HepG2 (cell line): ENCODE measurements at regions of chr2 and their contacts with region 1.

Region 1: GRCh38 chr2:138724327-138724726 is 55.9 kb downstream of the NXPH2 start:
- DNase-seq: peak; percentile 41
- ATAC-seq: peak; percentile 71
- H3K4me3 ChIP-seq: no peak overlapping the region; a peak in 1 of 6 replicates
- H3K27ac ChIP-seq: no peak overlapping the region
- H3K4me1 ChIP-seq: peaks cover 49% of the 10 kb centered on the region
- H3K27me3 ChIP-seq: peaks cover 2 to 15% of the 10 kb centered on the region in 2 experiments; a peak in 2 of 5 replicates
- CTCF ChIP-seq: no peak
- EP300 ChIP-seq: peak in 1 of 2 experiments; percentile 32; a peak in 1 of 4 replicates
- POLR2A ChIP-seq: no peak
- RAD21 ChIP-seq: no peak

Region 2: GRCh38 chr2:138632066-138632620 is 92.2 kb before region 1 on chr2:
- CTCF ChIA-PET with region 1: no interaction called
- POLR2A ChIA-PET with region 1: no interaction called
- in situ Hi-C with region 1: no loop called
- intact Hi-C with region 1: no loop called
- DNase-seq: no peak
- ATAC-seq: no peak
- H3K4me3 ChIP-seq: no peak overlapping the region
- H3K27ac ChIP-seq: no peak overlapping the region
- H3K4me1 ChIP-seq: no peaks in the 10 kb centered on the region
- H3K27me3 ChIP-seq: no peaks in the 10 kb centered on the region
- CTCF ChIP-seq: no peak
- EP300 ChIP-seq: no peak
- POLR2A ChIP-seq: no peak
- RAD21 ChIP-seq: no peak

Region 3: DNA sequence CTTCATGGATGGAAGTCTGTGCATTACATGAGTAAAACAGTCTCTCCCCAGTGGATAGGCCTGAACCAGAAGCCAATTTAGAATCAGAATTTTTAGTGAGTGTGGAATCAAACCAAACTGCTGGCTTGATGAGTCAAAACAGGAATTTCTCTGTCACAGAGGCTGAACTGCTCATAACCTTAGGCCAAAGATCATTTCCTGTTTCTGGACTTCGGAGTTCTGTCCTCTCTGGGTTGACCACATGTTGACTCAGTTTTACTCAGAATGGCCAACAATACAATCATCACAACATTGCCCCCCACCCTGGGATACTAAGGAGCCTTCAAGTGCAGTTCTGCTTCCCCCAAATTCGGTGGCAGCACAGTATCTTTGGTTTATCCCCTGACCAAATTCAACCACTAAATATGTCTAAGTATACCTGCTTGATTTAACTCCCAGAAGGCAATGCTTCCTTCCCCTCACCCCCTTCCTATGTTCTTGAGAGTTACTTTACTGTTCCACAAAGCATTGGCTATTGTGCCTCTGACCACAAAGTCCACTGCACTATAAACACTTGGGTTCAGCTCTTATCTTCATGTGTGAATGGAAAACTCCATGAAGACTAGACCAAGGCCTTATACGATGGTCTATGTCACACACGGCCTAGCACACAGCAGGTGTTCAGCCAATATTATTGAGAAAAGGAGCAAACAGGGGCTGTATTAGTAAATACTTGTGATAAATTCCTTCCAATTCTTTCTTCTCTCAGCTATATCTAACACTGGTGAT is 11.9 kb before region 1 on chr2:
- CTCF ChIA-PET with region 1: no interaction called
- POLR2A ChIA-PET with region 1: interaction called, 15 read pairs
- in situ Hi-C with region 1: no loop called
- intact Hi-C with region 1: no loop called
- DNase-seq: peak; percentile 37
- ATAC-seq: peak; percentile 76
- H3K4me3 ChIP-seq: peak overlapping the region in 2 of 3 experiments; percentile 21 to 43; a peak in 1 of 6 replicates
- H3K27ac ChIP-seq: no peak overlapping the region
- H3K4me1 ChIP-seq: peaks cover 46% of the 10 kb centered on the region
- H3K27me3 ChIP-seq: peaks cover 0 to 12% of the 10 kb centered on the region in 2 experiments; a peak in 2 of 5 replicates
- CTCF ChIP-seq: no peak
- EP300 ChIP-seq: peak in 1 of 2 experiments; percentile 53; a peak in 1 of 4 replicates
- POLR2A ChIP-seq: no peak
- RAD21 ChIP-seq: no peak

Region 4: DNA sequence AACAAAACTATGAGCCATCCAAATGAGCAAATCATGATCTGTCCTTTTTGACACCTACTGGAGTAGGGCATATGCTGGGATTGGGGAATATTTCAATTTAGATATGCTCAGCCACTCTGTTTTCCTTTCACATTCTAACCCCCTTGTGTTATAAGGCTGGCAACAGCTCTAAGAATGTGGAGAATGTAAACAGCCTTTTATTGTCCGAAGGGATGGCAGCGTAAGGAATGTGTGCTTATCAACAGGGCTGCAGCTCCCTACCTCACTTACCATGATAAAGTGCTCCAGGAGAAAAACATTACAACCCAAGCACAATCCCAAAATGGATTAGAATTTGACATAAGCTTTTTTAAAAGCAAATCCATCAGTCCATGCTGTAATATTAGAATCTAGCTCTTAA is 53.7 kb after region 1 on chr2:
- CTCF ChIA-PET with region 1: no interaction called
- POLR2A ChIA-PET with region 1: no interaction called
- in situ Hi-C with region 1: no loop called
- intact Hi-C with region 1: loop called (anchors 1 kb)
- DNase-seq: peak; percentile 69
- ATAC-seq: peak; percentile 79
- H3K4me3 ChIP-seq: no peak overlapping the region
- H3K27ac ChIP-seq: no peak overlapping the region
- H3K4me1 ChIP-seq: peaks cover 16% of the 10 kb centered on the region
- H3K27me3 ChIP-seq: peaks cover 8 to 46% of the 10 kb centered on the region in 2 experiments; a peak in 4 of 5 replicates
- CTCF ChIP-seq: no peak
- EP300 ChIP-seq: no peak
- POLR2A ChIP-seq: no peak
- RAD21 ChIP-seq: no peak